Heart right ventricle (tissue), 16 donors: ENCODE measurements at regions of chr13 and their contacts with region 1.

Region 1: GRCh38 chr13:102928941-102929675 is 83.3 kb downstream of the ERCC5 start:
- DNase-seq: no peak
- ATAC-seq: no peak
- H3K4me3 ChIP-seq: no peak overlapping the region
- H3K27ac ChIP-seq: no peak overlapping the region
- H3K4me1 ChIP-seq: no peaks in the 10 kb centered on the region
- H3K27me3 ChIP-seq: no peaks in the 10 kb centered on the region
- CTCF ChIP-seq: no peak

Region 2: DNA sequence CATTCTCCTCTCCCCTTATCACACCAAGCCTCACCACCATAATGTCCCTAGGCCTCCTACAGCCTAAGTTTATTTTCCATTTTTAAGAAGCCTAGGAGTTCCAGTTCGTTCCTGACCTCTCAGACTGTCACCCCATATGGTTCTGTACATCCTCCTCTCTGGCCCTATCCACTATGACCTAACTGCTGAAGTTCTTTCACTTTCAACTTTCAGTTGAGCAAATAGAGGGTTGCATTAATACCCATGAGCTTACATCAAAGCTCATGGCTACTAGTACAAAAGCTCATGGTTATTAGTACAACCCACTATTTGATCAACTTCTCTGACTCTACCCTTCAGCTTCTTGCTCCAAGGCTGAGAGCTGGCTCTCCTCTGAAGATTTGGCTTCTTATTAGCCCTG is 600.2 kb before region 1 on chr13:
- intact Hi-C with region 1: no loop called
- DNase-seq: no peak
- ATAC-seq: no peak
- H3K4me3 ChIP-seq: no peak overlapping the region
- H3K27ac ChIP-seq: no peak overlapping the region
- H3K4me1 ChIP-seq: no peaks in the 10 kb centered on the region
- H3K27me3 ChIP-seq: no peaks in the 10 kb centered on the region
- CTCF ChIP-seq: no peak

Region 3: DNA sequence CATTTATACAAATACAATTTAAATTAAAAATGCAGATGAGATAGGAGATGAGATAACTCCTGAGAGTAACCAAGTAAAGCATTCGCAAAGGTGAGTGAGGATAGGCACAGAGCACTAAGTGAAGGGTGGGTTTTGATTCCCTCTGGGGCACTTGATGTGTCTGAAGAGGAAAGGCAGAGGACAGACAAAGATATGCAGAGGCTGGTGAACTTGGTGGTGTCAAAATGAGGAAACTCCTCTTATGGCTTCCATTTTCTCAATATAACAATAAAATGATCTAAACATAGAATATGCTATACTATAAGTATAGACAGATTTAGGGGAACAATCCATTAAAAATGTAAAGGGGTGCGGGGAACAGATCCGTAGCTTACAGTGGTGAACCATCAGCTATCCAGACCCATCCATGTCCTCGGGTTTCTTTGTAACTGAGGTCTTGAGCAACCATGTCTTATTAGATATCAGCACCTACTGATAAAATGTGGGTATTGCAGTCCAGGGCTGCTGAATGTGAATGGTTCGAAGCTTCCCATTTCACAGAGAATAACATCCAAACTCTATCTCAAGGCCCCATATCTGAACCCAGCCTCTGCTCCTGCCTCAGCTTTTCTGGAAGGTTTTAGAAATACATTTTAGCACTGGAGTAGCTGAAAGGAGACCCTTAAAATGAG is 211.0 kb after region 1 on chr13:
- intact Hi-C with region 1: loop called in 1 of 10 experiments (anchors 10 kb)
- DNase-seq: no peak
- ATAC-seq: no peak
- H3K4me3 ChIP-seq: no peak overlapping the region
- H3K27ac ChIP-seq: no peak overlapping the region
- H3K4me1 ChIP-seq: no peaks in the 10 kb centered on the region
- H3K27me3 ChIP-seq: no peaks in the 10 kb centered on the region
- CTCF ChIP-seq: peak; percentile 15 to 52 (median 42)